ENCODE measurements at regions of chr20 and their contacts with region 1.

Region 1: GRCh38 chr20:8722276-8722928 is 346.5 kb upstream of the PLCB4 start:
- H3K4me3 Mint-ChIP-seq: no peak overlapping the region
- H3K27ac Mint-ChIP-seq: no peak overlapping the region
- H3K4me1 Mint-ChIP-seq: no peaks in the 10 kb centered on the region
- H3K27me3 Mint-ChIP-seq: no peaks in the 10 kb centered on the region

Region 2: DNA sequence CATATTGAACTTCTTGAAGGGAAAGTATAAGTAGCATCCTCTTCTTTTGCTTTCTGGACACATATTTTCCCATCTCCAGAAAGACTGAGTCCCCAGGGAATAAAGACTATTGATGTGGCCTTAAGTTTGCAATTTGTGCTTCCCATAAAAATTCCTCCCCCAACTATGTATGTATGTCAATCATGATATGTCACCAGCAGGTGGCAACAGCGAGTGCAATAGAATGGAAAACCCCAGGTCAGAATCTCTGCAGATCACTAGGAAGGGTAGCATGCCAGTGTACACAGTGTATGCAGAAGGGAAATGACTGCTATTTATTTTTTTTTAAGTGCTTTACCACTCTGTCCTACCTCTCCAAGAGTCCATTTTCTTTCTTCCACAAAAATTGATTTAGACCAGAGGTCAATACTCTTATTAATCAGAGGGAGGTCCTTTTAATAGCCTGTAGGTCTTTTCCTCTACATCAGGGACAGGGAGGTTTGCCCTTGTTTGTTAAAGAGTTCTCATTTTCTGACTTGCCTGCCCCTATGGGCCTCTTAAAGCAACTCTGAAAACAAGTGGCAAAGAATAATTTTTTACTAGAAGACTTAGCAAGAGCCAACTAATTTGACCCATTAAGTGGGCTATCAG is 1893.5 kb before region 1 on chr20:
- intact Hi-C with region 1: loop called (anchors 5 kb)
- H3K4me3 Mint-ChIP-seq: no peak overlapping the region
- H3K27ac Mint-ChIP-seq: no peak overlapping the region
- H3K4me1 Mint-ChIP-seq: no peaks in the 10 kb centered on the region
- H3K27me3 Mint-ChIP-seq: no peaks in the 10 kb centered on the region

Region 3: DNA sequence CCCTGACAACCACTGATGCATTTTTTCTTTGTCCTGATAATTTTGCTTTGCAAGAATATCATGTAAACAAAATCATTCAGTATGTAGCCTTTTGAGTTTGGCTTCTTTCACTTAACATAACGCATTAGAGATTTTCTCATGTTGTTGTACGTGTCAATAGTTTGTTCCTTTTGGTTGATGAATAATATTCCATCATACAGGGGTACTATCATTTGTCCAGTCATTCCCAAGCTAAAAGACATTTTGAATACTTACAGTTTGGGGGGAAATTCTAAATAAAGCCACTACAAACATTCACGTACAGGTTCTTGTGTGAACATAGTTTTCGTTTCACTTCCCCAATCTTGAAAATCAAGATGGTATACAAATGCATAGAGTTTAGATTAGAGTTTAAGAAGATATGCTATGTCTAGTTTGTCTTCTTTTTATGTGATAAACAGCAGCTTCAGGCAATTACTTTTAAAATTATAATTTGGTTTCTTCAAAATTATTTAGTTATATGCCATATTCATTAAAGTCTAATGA is 787.3 kb before region 1 on chr20:
- intact Hi-C with region 1: loop called (anchors 1 kb)
- H3K4me3 Mint-ChIP-seq: no peak overlapping the region
- H3K27ac Mint-ChIP-seq: no peak overlapping the region
- H3K4me1 Mint-ChIP-seq: peaks cover 18% of the 10 kb centered on the region
- H3K27me3 Mint-ChIP-seq: peaks cover 2% of the 10 kb centered on the region

Region 4: DNA sequence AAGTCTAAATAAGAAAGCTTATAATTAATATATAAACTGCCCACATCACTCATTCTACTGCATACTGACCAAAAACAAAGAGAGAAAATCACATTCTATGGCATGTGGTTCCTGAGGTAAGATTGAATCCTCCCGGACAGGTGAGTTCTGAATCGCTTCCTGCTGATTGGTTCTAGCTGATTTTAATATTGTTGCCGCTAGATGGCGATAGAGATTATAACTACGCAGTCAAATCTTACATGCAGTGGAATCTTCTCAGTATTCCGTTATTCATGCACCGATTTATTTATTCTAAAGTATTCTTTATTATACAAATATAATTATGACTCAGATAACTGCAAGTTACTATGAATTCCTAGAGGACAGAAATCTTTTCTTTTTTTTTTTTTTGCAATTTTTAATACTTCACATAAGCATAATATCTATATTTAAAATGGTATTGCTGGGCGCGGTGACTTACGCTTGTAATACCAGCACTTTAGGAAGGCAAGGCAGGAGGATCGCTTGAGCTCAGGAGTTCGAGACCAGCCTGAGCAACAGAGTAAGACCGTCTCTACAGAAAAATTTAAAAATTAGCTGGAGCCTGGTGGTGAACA is 678.6 kb before region 1 on chr20:
- intact Hi-C with region 1: loop called (anchors 1 kb)
- H3K4me3 Mint-ChIP-seq: no peak overlapping the region
- H3K27ac Mint-ChIP-seq: no peak overlapping the region
- H3K4me1 Mint-ChIP-seq: no peaks in the 10 kb centered on the region
- H3K27me3 Mint-ChIP-seq: no peaks in the 10 kb centered on the region

Region 5: GRCh38 chr20:8389381-8390036 is 332.9 kb before region 1 on chr20:
- intact Hi-C with region 1: loop called (anchors 5 kb)
- H3K4me3 Mint-ChIP-seq: no peak overlapping the region
- H3K27ac Mint-ChIP-seq: no peak overlapping the region
- H3K4me1 Mint-ChIP-seq: peaks cover 5% of the 10 kb centered on the region
- H3K27me3 Mint-ChIP-seq: no peaks in the 10 kb centered on the region